ENCODE measurements at regions of chr10 and their contacts with region 1.

Region 1: DNA sequence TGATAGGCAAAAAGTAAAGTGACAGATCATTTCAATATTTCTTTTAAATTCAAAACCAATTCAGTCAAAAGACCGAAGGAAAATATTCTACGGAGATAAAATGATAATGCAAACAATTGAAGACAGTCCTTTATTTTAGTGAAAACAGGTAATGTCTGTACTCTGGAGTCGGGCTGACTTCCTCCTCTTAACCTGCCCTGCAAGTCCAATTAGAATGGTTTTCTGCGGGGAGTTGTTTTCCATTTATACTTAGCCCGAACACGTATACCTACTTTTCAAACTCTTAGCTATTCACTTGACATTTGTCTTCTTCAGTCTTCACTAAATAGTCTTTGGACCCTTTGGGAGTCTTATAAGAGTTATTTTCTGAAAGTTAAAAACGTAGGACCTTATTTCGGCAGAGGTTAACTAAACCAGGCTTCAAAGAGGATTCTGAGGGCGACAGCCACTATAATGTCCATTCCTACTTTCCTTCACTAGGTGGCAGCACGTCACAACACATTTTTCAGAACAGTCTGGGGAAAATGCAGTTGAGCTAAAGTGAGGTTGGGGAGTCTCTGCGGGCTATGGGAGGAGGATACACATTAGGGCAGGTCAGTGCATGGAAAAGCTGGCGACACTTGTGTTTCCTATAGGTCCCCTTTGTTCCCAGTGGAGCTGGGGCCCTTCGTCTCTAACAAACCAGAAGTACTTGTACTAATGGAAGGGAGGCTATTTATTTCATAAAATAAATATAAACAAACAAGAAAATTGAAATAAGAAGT is 472.0 kb downstream of the KCNMA1 start:
- DNase-seq: no peak

Region 2: DNA sequence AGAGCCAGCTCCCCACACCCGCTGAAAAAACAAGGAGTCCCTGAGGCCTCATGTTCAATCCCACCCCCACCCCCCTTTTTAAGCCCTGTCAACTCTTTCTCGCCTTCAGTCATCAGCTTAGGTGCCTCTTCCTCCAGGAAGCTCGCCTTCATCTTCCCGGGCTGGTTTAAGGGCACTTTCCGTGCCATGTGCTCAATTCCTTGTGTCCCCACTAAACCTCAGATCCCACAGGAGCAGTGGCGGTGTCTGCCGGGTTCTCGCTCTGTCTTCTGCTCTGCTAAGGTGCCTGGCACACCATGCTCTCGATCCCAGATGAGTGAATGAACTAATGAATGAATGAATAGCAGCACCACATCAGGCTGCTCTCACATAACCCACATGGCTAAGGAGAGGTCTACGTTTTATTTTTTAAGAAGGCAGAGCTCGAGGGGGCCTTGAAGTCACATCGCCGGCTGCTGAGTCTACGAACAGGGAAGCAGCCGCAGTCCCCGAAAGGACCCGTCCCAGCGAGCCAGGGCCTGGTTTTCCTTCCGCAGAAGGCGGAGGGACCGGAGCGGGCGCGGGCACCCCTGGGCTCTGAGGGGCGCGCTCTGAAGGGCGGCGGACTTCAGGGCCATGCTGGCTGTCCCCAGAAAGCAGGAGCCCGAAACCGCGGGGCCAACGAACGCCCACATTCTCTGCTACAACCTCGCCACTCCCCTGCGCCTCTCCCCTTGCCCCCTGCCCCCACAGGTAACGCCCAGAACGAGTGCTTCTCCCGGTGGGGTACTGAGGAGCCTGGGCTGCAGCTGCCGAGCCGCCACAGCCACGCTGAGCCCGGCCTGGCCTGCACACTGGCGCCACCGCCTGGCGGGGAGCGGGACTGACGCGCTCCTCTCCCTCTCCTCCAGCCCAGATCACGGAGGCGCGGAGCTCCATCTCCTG is 545.4 kb after region 1 on chr10:
- intact Hi-C with region 1: loop called (anchors 10 kb)
- DNase-seq: peak; percentile 93